ENCODE measurements at regions of chr18 and their contacts with region 1.

Region 1: GRCh38 chr18:31918733-31919132 is 24.2 kb downstream of the TRAPPC8 start:
- DNase-seq: no peak
- H3K4me3 ChIP-seq: no peak overlapping the region
- H3K27ac ChIP-seq: no peak overlapping the region
- H3K4me1 ChIP-seq: no peaks in the 10 kb centered on the region
- H3K27me3 ChIP-seq: no peaks in the 10 kb centered on the region
- CTCF ChIP-seq: no peak
- POLR2A ChIP-seq: no peak

Region 2: DNA sequence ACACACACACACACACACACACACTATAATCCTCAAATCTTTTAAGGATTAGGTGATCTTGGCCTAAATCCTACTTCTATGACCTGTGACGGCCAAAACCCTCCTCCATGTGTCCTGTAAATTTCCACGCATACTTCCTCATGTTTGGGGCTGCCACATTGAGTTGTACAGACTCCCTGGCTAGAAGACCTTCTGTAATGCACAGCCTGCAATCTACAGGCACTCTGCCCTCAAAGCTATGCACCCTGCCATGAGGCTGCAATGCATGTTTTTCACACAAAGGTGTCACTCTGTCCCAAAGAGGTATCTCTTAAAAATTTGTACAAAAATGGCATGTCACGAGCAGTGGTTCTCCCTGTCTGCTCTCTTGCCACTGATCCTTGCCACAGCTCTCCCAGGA is 207.9 kb before region 1 on chr18:
- intact Hi-C with region 1: no loop called
- DNase-seq: no peak
- H3K4me3 ChIP-seq: no peak overlapping the region
- H3K27ac ChIP-seq: no peak overlapping the region
- H3K4me1 ChIP-seq: no peaks in the 10 kb centered on the region
- H3K27me3 ChIP-seq: no peaks in the 10 kb centered on the region
- CTCF ChIP-seq: no peak
- POLR2A ChIP-seq: no peak

Region 3: GRCh38 chr18:31876707-31877106 is 42.0 kb before region 1 on chr18:
- intact Hi-C with region 1: loop called (anchors 5 kb)
- DNase-seq: no peak
- H3K4me3 ChIP-seq: no peak overlapping the region
- H3K27ac ChIP-seq: no peak overlapping the region
- H3K4me1 ChIP-seq: no peaks in the 10 kb centered on the region
- H3K27me3 ChIP-seq: no peaks in the 10 kb centered on the region
- CTCF ChIP-seq: no peak
- POLR2A ChIP-seq: no peak